Motor neuron (in vitro differentiated cells): ENCODE measurements at regions of chr3 and their contacts with region 1.

Region 1: GRCh38 chr3:46378426-46378942 is 7.7 kb downstream of the CCR5 start:
- ATAC-seq: peak in 4 of 8 experiments; percentile 52 to 94 (median 90)
- H3K4me3 ChIP-seq: no peak overlapping the region
- H3K27ac ChIP-seq: no peak overlapping the region
- H3K4me1 ChIP-seq: no peaks in the 10 kb centered on the region

Region 2: GRCh38 chr3:46078712-46079400 is 299.6 kb before region 1 on chr3:
- in situ Hi-C with region 1: loop called in 3 of 9 experiments (anchors 10 to 25 kb)
- ATAC-seq: peak; percentile 83 to 100 (median 94)
- H3K4me3 ChIP-seq: no peak overlapping the region
- H3K27ac ChIP-seq: no peak overlapping the region
- H3K4me1 ChIP-seq: no peaks in the 10 kb centered on the region

Region 3: GRCh38 chr3:46186471-46187340 is 191.8 kb before region 1 on chr3:
- in situ Hi-C with region 1: no loop called
- ATAC-seq: no peak
- H3K4me3 ChIP-seq: no peak overlapping the region
- H3K27ac ChIP-seq: no peak overlapping the region
- H3K4me1 ChIP-seq: no peaks in the 10 kb centered on the region